PC-9 (cell line): ENCODE measurements at regions of chr21 and their contacts with region 1.

Region 1: DNA sequence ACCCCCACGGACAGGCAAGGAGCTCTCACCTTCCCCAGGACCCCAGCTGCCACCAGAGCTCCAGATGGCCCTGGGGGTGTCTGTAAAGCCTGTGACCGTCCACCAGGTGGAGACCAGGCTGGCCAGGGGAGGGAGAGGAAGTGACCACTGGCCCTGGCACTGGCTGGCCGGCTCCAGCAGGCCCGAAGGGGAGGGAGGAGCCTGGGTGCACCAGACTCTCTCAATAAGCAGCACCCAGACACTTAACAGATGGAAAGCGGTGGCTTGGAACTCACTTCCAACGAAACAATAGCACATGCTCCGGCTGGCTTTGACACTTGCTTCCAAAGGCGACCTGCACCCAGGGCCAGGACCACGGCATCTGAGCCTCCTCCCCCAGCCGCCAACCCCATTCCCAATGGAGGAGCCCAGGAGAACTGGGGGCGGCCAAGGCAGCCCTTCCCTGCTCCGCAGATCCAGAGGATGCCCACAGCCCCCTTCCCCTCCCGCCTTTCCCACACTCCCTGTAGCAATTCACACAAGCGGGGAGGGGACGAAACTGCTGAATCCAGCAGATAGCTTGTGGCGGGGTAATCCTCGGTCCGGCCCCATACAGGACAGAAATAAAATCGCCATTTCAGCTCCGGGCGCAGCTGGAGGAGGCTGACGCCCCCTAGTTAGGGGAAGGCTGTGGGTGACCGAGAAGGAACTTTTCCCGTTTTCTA is 742 bp upstream of the PDE9A start:
- DNase-seq: peak; percentile 50 to 72
- H3K4me3 ChIP-seq: no peak overlapping the region
- H3K27ac ChIP-seq: no peak overlapping the region
- H3K4me1 ChIP-seq: peaks cover 24% of the 10 kb centered on the region
- H3K27me3 ChIP-seq: no peaks in the 10 kb centered on the region
- CTCF ChIP-seq: peak; percentile 68; the same call in 1 of the 2 replicates

Region 2: GRCh38 chr21:42593007-42593806 is 59.5 kb before region 1 on chr21:
- CTCF ChIA-PET with region 1: interaction called, 3 read pairs
- POLR2A ChIA-PET with region 1: no interaction called
- intact Hi-C with region 1: loop called (anchors 2 kb)
- DNase-seq: peak in 1 of 2 experiments; percentile 65
- H3K4me3 ChIP-seq: no peak overlapping the region; the same call in 1 of the 2 replicates
- H3K27ac ChIP-seq: no peak overlapping the region
- H3K4me1 ChIP-seq: no peaks in the 10 kb centered on the region
- H3K27me3 ChIP-seq: no peaks in the 10 kb centered on the region
- CTCF ChIP-seq: peak; percentile 74

Region 3: GRCh38 chr21:42684109-42684916 is 31.6 kb after region 1 on chr21:
- CTCF ChIA-PET with region 1: no interaction called
- POLR2A ChIA-PET with region 1: no interaction called
- intact Hi-C with region 1: no loop called
- DNase-seq: no peak
- H3K4me3 ChIP-seq: no peak overlapping the region
- H3K27ac ChIP-seq: no peak overlapping the region
- H3K4me1 ChIP-seq: no peaks in the 10 kb centered on the region
- H3K27me3 ChIP-seq: no peaks in the 10 kb centered on the region
- CTCF ChIP-seq: no peak

Region 4: GRCh38 chr21:42734323-42734971 is 81.8 kb after region 1 on chr21:
- CTCF ChIA-PET with region 1: no interaction called
- POLR2A ChIA-PET with region 1: interaction called, 4 read pairs
- intact Hi-C with region 1: loop called (anchors 5 kb)
- DNase-seq: peak in 1 of 2 experiments; percentile 37
- H3K4me3 ChIP-seq: no peak overlapping the region
- H3K27ac ChIP-seq: no peak overlapping the region
- H3K4me1 ChIP-seq: peaks cover 19% of the 10 kb centered on the region
- H3K27me3 ChIP-seq: no peaks in the 10 kb centered on the region
- CTCF ChIP-seq: no peak